ENCODE measurements at regions of chr5 and their contacts with region 1.

Region 1: DNA sequence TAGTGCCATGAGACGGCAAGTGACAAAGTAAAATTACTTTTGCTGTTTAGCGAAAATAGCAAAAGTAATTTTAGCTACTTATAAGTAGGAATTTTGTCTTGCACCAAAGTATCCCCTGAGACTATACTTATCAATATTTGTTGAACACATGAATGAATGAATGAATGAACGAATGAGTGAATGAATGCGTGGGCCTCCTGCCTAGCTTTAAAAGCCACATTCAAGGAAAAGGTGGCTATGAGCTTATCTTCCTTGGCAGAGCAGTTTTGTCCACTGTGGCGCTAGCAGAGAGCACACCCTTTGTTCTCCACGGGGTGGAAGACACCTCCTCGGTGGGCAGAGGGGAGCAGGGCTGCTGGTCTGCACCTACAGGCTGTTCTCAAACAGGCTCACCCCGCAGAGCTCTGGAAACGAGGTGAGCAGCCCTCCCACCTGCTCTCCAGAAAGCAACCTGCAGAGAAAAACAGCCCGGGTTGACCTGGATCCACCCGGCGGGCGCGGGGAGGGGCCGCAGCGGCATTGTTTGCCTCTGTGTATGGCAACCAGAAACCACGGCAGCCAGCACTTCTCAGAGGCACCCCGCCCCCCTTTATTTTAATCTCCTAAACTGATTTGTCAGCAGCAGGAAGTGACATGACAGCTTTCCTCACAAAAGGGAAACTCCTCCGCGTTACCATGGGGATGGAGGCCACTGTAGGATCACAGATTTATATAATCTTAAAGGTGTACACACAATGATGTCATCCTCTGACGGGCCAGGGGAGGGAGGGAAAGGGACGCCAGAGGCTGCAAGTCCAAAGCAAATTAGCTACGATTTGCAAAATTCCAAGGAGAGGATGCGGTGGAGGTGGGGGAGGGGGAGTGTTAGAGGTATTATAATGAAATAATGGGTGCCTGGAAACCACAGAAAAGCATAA is 5.9 kb downstream of the DUSP1 start:
- DNase-seq: peak; percentile 90 to 99
- ATAC-seq: peak; percentile 62 to 82 (median 64)
- H3K4me3 ChIP-seq: peak overlapping the region; percentile 43
- H3K4me3 Mint-ChIP-seq: peak overlapping the region; percentile 90
- H3K27ac ChIP-seq: peak overlapping the region; percentile 92
- H3K27ac Mint-ChIP-seq: peak overlapping the region; percentile 98 to 99
- H3K4me1 ChIP-seq: peaks cover 42% of the 10 kb centered on the region
- H3K4me1 Mint-ChIP-seq: peaks cover 46 to 54% of the 10 kb centered on the region in 2 donors
- H3K27me3 ChIP-seq: no peaks in the 10 kb centered on the region
- H3K27me3 Mint-ChIP-seq: no peaks in the 10 kb centered on the region
- CTCF ChIP-seq: no peak

Region 2: GRCh38 chr5:171549274-171549673 is 1215.8 kb before region 1 on chr5:
- intact Hi-C with region 1: no loop called
- DNase-seq: no peak
- ATAC-seq: no peak
- H3K4me3 ChIP-seq: no peak overlapping the region
- H3K4me3 Mint-ChIP-seq: no peak overlapping the region
- H3K27ac ChIP-seq: no peak overlapping the region
- H3K27ac Mint-ChIP-seq: no peak overlapping the region
- H3K4me1 ChIP-seq: no peaks in the 10 kb centered on the region
- H3K4me1 Mint-ChIP-seq: no peaks in the 10 kb centered on the region
- H3K27me3 ChIP-seq: no peaks in the 10 kb centered on the region
- H3K27me3 Mint-ChIP-seq: peaks cover 2 to 6% of the 10 kb centered on the region in 2 donors
- CTCF ChIP-seq: no peak

Region 3: DNA sequence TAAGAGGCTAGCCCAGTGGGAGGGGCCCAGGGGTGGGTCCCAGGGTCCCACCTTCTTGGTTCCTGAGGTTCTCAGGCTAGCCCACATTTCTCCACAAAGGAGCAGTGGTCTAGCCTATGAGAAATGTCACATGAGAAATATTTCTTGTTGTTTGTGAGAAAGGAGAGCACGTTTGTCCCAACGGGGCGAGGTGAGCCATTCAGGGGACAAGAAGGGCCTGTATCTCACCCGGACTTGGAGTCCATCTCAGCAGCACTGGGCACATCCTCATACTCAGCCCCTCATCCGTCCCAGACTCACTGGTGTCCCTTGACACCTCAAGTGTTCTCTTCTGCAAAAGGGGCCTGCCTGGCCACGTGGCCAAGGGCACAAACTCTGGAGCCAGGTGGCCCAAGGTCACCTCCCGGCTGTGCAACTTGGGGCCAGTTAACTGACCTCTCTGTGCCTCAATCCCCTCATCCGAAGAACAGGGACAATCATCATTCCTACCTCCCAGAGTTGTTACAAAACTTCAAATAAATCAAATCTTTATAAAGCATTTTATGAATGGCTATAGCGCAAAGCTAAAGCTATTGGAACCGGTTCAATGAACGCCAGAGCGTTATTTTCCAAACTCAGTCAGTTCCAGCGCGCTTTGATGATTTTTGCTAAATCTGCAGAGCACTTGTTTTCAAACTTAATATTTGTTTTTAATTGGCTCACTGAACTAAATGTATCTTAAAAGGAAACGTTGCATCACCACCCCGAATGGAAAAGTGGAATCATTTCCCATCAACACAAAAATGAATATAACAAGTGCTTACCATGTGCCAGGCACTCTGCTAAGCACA is 43.6 kb before region 1 on chr5:
- intact Hi-C with region 1: loop called (anchors 2 kb)
- DNase-seq: no peak
- ATAC-seq: peak; percentile 16 to 39 (median 24)
- H3K4me3 ChIP-seq: no peak overlapping the region
- H3K4me3 Mint-ChIP-seq: peak overlapping the region; percentile 83
- H3K27ac ChIP-seq: peak overlapping the region; percentile 17
- H3K27ac Mint-ChIP-seq: peak overlapping the region; percentile 65 to 76
- H3K4me1 ChIP-seq: peaks cover 40% of the 10 kb centered on the region
- H3K4me1 Mint-ChIP-seq: peaks cover 28 to 33% of the 10 kb centered on the region in 2 donors
- H3K27me3 ChIP-seq: peaks cover 21% of the 10 kb centered on the region
- H3K27me3 Mint-ChIP-seq: peaks cover 50 to 51% of the 10 kb centered on the region in 2 donors
- CTCF ChIP-seq: no peak

Region 4: GRCh38 chr5:172806897-172807672 is 42.0 kb after region 1 on chr5:
- intact Hi-C with region 1: loop called (anchors 1 kb)
- DNase-seq: peak; percentile 77 to 90
- ATAC-seq: peak; percentile 97 to 99 (median 99)
- H3K4me3 ChIP-seq: peak overlapping the region; percentile 49
- H3K4me3 Mint-ChIP-seq: peak overlapping the region; percentile 80
- H3K27ac ChIP-seq: peak overlapping the region; percentile 91
- H3K27ac Mint-ChIP-seq: peak overlapping the region; percentile 81 to 93
- H3K4me1 ChIP-seq: peaks cover 21% of the 10 kb centered on the region
- H3K4me1 Mint-ChIP-seq: peaks cover 9 to 25% of the 10 kb centered on the region in 2 donors
- H3K27me3 ChIP-seq: no peaks in the 10 kb centered on the region
- H3K27me3 Mint-ChIP-seq: no peaks in the 10 kb centered on the region
- CTCF ChIP-seq: no peak

Region 5: GRCh38 chr5:172881691-172882370 is 116.7 kb after region 1 on chr5:
- intact Hi-C with region 1: loop called (anchors 1 kb)
- DNase-seq: peak; percentile 38 to 56
- ATAC-seq: peak; percentile 86 to 91 (median 90)
- H3K4me3 ChIP-seq: no peak overlapping the region
- H3K4me3 Mint-ChIP-seq: no peak overlapping the region
- H3K27ac ChIP-seq: peak overlapping the region; percentile 63
- H3K27ac Mint-ChIP-seq: peak overlapping the region; percentile 86 to 91
- H3K4me1 ChIP-seq: peaks cover 35% of the 10 kb centered on the region
- H3K4me1 Mint-ChIP-seq: peaks cover 29 to 50% of the 10 kb centered on the region in 2 donors
- H3K27me3 ChIP-seq: no peaks in the 10 kb centered on the region
- H3K27me3 Mint-ChIP-seq: no peaks in the 10 kb centered on the region
- CTCF ChIP-seq: no peak

Region 6: DNA sequence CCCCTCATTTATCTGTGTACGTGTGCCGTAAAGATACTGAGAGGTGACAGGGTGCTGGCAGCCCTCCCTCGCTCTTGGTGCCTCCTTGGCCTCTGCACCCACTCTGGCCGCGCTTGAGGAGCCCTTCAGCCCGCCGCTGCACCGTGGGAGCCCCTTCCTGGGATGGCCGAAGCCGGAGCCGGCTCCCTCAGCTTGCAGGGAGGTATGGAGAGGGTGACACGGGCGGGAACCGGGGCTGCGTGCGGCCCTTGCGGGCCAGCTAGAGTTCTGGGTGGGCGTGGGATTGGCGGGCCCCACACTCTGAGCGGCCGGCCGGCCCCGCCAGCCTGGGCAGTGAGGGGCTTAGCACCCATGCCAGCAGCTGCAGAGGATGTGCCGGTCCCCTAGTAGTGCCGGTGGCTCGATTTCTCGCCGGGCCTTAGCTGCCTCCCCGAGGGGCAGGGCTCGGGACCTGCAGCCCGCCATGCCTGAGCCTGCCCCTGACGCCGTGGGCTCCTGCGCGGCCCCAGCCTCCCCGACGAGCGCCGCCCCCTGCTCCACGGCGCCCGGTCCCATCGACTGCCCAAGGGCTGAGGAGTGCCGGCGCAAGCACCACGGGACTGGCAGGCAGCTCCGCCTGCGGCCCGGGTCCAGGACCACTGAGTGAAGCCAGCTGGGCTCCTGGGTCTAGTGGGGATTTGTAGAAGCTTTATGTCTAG is 448.3 kb after region 1 on chr5:
- intact Hi-C with region 1: no loop called
- DNase-seq: no peak
- ATAC-seq: no peak
- H3K4me3 ChIP-seq: no peak overlapping the region
- H3K4me3 Mint-ChIP-seq: no peak overlapping the region
- H3K27ac ChIP-seq: no peak overlapping the region
- H3K27ac Mint-ChIP-seq: no peak overlapping the region
- H3K4me1 ChIP-seq: no peaks in the 10 kb centered on the region
- H3K4me1 Mint-ChIP-seq: no peaks in the 10 kb centered on the region
- H3K27me3 ChIP-seq: peaks cover 2% of the 10 kb centered on the region
- H3K27me3 Mint-ChIP-seq: peaks cover 21 to 45% of the 10 kb centered on the region in 2 donors
- CTCF ChIP-seq: no peak